ENCODE measurements at regions of chr15 and their contacts with region 1.

Region 1: DNA sequence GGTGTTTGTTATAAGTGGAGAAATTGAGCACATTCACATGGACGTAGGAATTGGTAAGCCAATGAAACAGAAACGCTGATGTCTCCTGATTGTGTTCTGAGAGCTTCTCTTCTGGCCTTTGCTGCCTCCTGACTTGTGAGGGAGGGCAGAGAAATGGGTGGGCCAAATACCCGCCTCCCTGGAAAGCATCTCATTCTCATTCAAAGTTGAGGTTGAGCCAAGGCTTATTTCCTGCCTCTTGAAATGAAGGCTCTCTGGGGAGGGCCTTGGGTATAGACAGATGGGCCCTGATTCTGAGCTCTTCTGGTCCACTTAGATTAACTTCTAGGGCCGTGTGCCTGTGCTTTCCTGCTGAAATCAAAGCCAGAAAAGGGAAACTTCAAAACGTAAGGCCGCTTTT is 57.4 kb upstream of the MYZAP start:
- DNase-seq: no peak
- ATAC-seq: peak in 1 of 2 donors; percentile 27
- H3K4me3 ChIP-seq: no peak overlapping the region
- H3K27ac ChIP-seq: peak overlapping the region; percentile 56
- H3K4me1 ChIP-seq: peaks cover 25% of the 10 kb centered on the region
- H3K27me3 ChIP-seq: no peaks in the 10 kb centered on the region
- CTCF ChIP-seq: no peak

Region 2: GRCh38 chr15:57340682-57341259 is 193.5 kb before region 1 on chr15:
- intact Hi-C with region 1: loop called (anchors 5 kb)
- DNase-seq: no peak
- ATAC-seq: peak; percentile 79 to 83
- H3K4me3 ChIP-seq: no peak overlapping the region
- H3K27ac ChIP-seq: no peak overlapping the region
- H3K4me1 ChIP-seq: peaks cover 10% of the 10 kb centered on the region
- H3K27me3 ChIP-seq: no peaks in the 10 kb centered on the region
- CTCF ChIP-seq: peak; percentile 87

Region 3: DNA sequence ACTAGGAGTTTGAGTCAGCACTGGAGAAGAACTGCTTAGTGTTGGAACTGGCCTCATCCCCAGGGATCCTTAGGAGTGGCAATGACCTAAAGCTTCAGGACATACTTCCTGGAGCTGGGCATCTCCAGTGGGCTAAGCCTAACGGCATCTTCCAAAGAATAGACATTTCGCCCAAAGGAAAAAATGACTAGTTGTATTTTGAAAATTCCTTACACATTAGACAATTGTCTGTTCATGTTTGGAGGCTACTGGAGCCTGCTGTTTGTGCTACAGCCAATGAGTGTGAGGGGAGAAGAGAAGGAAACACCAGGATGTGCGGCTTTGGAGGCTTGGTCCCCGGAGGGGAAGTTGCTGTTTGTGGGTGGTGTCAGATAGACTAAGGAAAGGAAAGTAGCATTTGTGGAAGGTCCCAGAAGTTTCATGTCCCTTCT is 249.8 kb after region 1 on chr15:
- intact Hi-C with region 1: no loop called
- DNase-seq: no peak
- ATAC-seq: no peak
- H3K4me3 ChIP-seq: no peak overlapping the region
- H3K27ac ChIP-seq: no peak overlapping the region
- H3K4me1 ChIP-seq: no peaks in the 10 kb centered on the region
- H3K27me3 ChIP-seq: no peaks in the 10 kb centered on the region
- CTCF ChIP-seq: no peak